IMR-90 (cell line): ENCODE measurements at regions of chr3 and their contacts with region 1.

Region 1: DNA sequence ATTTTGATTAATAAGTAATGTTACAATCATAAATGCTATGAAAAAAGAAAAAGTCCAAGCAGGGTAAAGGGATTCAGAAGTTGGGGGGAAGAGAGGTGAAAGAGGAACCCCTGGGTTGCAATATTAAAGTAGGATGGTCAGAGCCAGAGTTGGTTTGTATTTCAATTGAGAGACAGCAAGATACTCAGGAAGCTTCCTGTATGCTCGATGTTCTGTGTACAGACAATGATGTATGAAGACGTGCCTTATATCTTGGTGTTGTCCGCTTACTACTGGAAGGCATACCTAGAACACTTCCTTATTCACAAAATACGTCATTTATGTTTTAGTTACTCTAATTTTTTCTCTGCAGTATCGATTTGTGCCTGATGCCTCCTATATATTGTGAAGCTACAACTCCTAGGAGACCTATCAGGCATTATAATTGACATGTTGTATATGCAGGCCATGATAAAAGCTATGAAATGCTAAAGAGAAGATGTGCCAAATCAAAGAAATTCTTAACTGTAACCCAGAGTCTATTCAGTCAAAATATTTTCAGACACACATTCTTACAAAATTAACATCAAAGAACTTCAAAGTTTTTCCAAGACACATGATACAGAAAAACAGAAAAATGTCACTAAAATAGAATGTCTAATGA is 87.5 kb downstream of the TBL1XR1 start:
- DNase-seq: no peak
- ATAC-seq: no peak
- H3K4me3 ChIP-seq: no peak overlapping the region
- H3K27ac ChIP-seq: no peak overlapping the region
- H3K4me1 ChIP-seq: peaks cover 8% of the 10 kb centered on the region; the same call in 1 of the 2 replicates
- H3K27me3 ChIP-seq: no peaks in the 10 kb centered on the region
- CTCF ChIP-seq: no peak
- POLR2A ChIP-seq: no peak
- RAD21 ChIP-seq: no peak

Region 2: DNA sequence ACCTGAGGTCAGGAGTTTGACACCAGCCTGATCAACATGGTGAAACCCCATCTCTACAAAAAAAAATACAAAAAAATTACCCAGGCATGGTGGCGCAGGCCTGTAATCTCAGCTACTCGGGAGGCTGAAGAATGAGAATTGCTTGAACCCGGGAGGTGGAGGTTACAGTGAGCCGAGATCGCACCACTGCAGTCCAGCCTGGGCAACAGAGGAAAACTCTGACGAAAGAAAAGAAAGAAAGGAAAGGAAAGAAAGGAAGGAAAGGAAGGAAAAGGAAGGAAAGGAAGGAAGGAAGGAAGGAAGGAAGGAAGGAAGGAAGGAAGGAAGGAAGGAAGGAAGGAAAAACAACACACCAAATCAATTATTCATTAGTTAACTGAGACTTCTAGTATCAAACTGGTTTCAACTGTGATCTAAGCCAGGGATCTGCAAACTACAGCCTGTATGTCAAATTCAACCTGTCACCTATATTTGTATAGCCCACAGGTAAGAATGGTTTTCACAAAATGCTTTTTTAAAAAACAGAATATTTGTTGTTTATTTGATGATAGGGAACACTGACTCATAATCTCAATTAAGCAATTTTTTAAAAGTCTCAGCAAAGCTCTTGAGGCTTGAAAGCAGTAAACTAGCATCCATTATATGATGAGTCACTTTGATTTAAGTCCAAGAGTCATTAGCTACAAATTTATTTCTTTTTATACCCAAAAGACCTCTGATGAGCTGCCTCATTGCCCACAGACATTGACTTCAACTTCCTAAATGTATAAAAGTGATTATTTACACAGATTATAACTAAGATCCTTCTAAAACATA is 40.1 kb before region 1 on chr3:
- CTCF ChIA-PET with region 1: no interaction called
- POLR2A ChIA-PET with region 1: no interaction called
- dilution Hi-C with region 1: no loop called
- in situ Hi-C with region 1: no loop called
- intact Hi-C with region 1: loop called (anchors 5 kb)
- DNase-seq: peak; percentile 75
- ATAC-seq: peak; percentile 53
- H3K4me3 ChIP-seq: no peak overlapping the region
- H3K27ac ChIP-seq: no peak overlapping the region
- H3K4me1 ChIP-seq: peaks cover 6% of the 10 kb centered on the region
- H3K27me3 ChIP-seq: no peaks in the 10 kb centered on the region
- CTCF ChIP-seq: no peak
- POLR2A ChIP-seq: no peak
- RAD21 ChIP-seq: no peak